ENCODE measurements at regions of chr1 and their contacts with region 1.

Region 1: GRCh38 chr1:155063550-155064110 is at the start of gene EFNA4:
- DNase-seq: peak; percentile 89
- ATAC-seq: peak; percentile 92
- total RNA-seq, gene EFNA4: 2.1 TPM

Region 2: DNA sequence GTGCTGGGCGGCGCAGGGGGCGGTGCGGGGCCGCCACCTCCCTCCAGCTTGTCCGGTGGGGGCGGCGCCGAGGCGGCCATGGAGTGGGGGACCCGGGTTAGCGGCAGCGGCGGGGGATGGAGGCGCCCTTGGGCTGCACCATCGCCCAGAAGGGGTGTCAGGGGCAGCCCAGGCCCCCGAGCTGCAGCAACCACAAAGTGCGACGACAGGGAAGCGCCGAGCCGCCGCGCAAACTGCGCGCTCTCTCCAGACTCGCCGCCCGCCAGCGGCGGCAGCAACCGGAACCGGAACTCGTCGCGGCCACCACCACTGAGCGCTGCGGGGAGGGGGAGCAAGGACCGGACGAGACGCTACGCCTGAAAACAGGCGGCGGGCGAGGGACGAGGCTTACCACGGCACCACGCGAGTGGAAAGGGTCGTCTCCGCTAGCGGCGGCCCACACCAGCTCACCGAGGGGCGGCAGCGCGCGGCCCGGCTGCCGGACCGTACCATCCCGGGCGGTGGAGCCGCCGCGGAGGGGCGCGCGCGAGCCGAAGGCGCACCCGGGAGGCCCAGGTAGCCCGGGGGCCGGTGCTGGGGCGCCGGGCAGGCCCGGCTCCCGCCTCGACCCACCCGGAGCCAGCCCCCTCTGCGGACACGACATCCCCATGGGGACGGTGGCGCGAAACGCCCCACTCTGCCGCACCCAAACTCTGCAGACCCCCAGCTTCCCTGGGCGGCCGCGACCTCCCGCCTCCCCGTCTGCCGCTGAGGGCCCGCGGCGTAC is 102.0 kb before region 1 on chr1 and contains the start of gene PYGO2:
- intact Hi-C with region 1: loop called (anchors 5 kb)
- DNase-seq: peak; percentile 93
- ATAC-seq: peak; percentile 87
- total RNA-seq, gene PYGO2: 16.0 TPM

Measured in Right ventricle myocardium inferior (tissue), 1 donor.